Vagina (tissue), 2 donors: ENCODE measurements at regions of chr7 and their contacts with region 1.

Region 1: GRCh38 chr7:5088906-5089305 is 43.2 kb downstream of the RBAK start:
- DNase-seq: no peak
- H3K4me3 ChIP-seq: no peak overlapping the region
- H3K27ac ChIP-seq: no peak overlapping the region
- H3K4me1 ChIP-seq: no peaks in the 10 kb centered on the region
- H3K27me3 ChIP-seq: no peaks in the 10 kb centered on the region
- CTCF ChIP-seq: no peak
- POLR2A ChIP-seq: no peak

Region 2: GRCh38 chr7:4307316-4308204 is 781.3 kb before region 1 on chr7:
- intact Hi-C with region 1: no loop called
- DNase-seq: peak in 1 of 2 donors; percentile 72
- H3K4me3 ChIP-seq: no peak overlapping the region
- H3K27ac ChIP-seq: no peak overlapping the region
- H3K4me1 ChIP-seq: no peaks in the 10 kb centered on the region
- H3K27me3 ChIP-seq: no peaks in the 10 kb centered on the region
- CTCF ChIP-seq: no peak
- POLR2A ChIP-seq: no peak

Region 3: GRCh38 chr7:4797858-4798705 is 290.8 kb before region 1 on chr7:
- intact Hi-C with region 1: loop called (anchors 5 kb)
- DNase-seq: no peak
- H3K4me3 ChIP-seq: no peak overlapping the region
- H3K27ac ChIP-seq: no peak overlapping the region
- H3K4me1 ChIP-seq: peaks cover 8% of the 10 kb centered on the region
- H3K27me3 ChIP-seq: no peaks in the 10 kb centered on the region
- CTCF ChIP-seq: peak; percentile 35 to 76 (median 75)
- POLR2A ChIP-seq: no peak

Region 4: DNA sequence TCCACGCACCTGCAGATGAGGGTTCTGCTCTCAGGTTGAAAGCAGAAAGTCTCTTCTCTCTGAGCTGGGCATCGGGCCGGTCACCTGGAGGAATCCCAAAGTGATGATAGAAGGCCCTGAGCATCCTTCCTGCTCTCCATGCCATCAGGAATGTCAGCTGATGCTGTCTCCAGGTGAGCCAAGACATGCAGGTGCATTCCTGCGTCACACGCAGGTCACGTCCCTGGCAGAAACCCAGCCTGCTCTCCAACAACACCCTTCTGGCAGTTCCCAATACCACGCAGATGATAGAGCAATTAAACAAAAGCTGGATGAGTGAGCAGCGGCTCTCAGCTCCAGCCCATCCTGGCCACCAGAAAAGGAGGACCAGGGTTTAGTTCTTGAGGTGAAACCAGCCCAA is 94.2 kb after region 1 on chr7:
- intact Hi-C with region 1: no loop called
- DNase-seq: no peak
- H3K4me3 ChIP-seq: no peak overlapping the region
- H3K27ac ChIP-seq: no peak overlapping the region
- H3K4me1 ChIP-seq: no peaks in the 10 kb centered on the region
- H3K27me3 ChIP-seq: no peaks in the 10 kb centered on the region
- CTCF ChIP-seq: no peak
- POLR2A ChIP-seq: no peak